HepG2 (cell line): ENCODE measurements at regions of chr3 and their contacts with region 1.

Region 1: GRCh38 chr3:385151-385550 is 188.6 kb downstream of the CHL1 start:
- DNase-seq: no peak
- ATAC-seq: no peak
- H3K4me3 ChIP-seq: no peak overlapping the region
- H3K27ac ChIP-seq: no peak overlapping the region
- H3K4me1 ChIP-seq: no peaks in the 10 kb centered on the region
- H3K27me3 ChIP-seq: no peaks in the 10 kb centered on the region
- CTCF ChIP-seq: no peak
- EP300 ChIP-seq: no peak
- POLR2A ChIP-seq: no peak
- RAD21 ChIP-seq: no peak

Region 2: GRCh38 chr3:243356-243725 is 141.8 kb before region 1 on chr3:
- CTCF ChIA-PET with region 1: no interaction called
- POLR2A ChIA-PET with region 1: no interaction called
- in situ Hi-C with region 1: no loop called
- intact Hi-C with region 1: no loop called
- DNase-seq: no peak
- ATAC-seq: no peak
- H3K4me3 ChIP-seq: no peak overlapping the region
- H3K27ac ChIP-seq: no peak overlapping the region
- H3K4me1 ChIP-seq: no peaks in the 10 kb centered on the region
- H3K27me3 ChIP-seq: no peaks in the 10 kb centered on the region; a peak in 1 of 5 replicates
- CTCF ChIP-seq: no peak
- EP300 ChIP-seq: no peak
- POLR2A ChIP-seq: no peak
- RAD21 ChIP-seq: no peak

Region 3: GRCh38 chr3:403826-404225 is 18.7 kb after region 1 on chr3:
- CTCF ChIA-PET with region 1: no interaction called
- POLR2A ChIA-PET with region 1: no interaction called
- in situ Hi-C with region 1: no loop called
- intact Hi-C with region 1: loop called (anchors 1 kb)
- DNase-seq: no peak
- ATAC-seq: no peak
- H3K4me3 ChIP-seq: no peak overlapping the region
- H3K27ac ChIP-seq: no peak overlapping the region
- H3K4me1 ChIP-seq: no peaks in the 10 kb centered on the region
- H3K27me3 ChIP-seq: no peaks in the 10 kb centered on the region
- CTCF ChIP-seq: no peak
- EP300 ChIP-seq: no peak
- POLR2A ChIP-seq: no peak
- RAD21 ChIP-seq: no peak

Region 4: GRCh38 chr3:492586-493296 is 107.6 kb after region 1 on chr3:
- CTCF ChIA-PET with region 1: no interaction called
- POLR2A ChIA-PET with region 1: no interaction called
- in situ Hi-C with region 1: no loop called
- intact Hi-C with region 1: no loop called
- DNase-seq: no peak
- ATAC-seq: no peak
- H3K4me3 ChIP-seq: no peak overlapping the region
- H3K27ac ChIP-seq: no peak overlapping the region
- H3K4me1 ChIP-seq: no peaks in the 10 kb centered on the region
- H3K27me3 ChIP-seq: no peaks in the 10 kb centered on the region
- CTCF ChIP-seq: no peak
- EP300 ChIP-seq: no peak
- POLR2A ChIP-seq: no peak
- RAD21 ChIP-seq: no peak